Posterior cingulate gyrus (tissue), 11 donors: ENCODE measurements at regions of chr14 and their contacts with region 1.

Region 1: GRCh38 chr14:90301668-90302090 is 30.1 kb downstream of the NRDE2 start:
- DNase-seq: no peak

Region 2: GRCh38 chr14:90355540-90356518 is 54.1 kb after region 1 on chr14:
- intact Hi-C with region 1: no loop called
- DNase-seq: no peak

Region 3: GRCh38 chr14:90697577-90698206 is 396.0 kb after region 1 on chr14:
- intact Hi-C with region 1: loop called (anchors 5 kb)
- DNase-seq: peak; percentile 82 to 98 (median 91)

Region 4: GRCh38 chr14:90894241-90894640 is 592.6 kb after region 1 on chr14:
- intact Hi-C with region 1: loop called (anchors 10 kb)
- DNase-seq: no peak